ENCODE measurements at regions of chr12 and their contacts with region 1.

Region 1: GRCh38 chr12:121793838-121794533 is 498 bp upstream of the RHOF start:
- DNase-seq: peak; percentile 88 to 96
- ATAC-seq: peak; percentile 45 to 74
- H3K4me3 ChIP-seq: peak overlapping the region; percentile 96
- H3K27ac ChIP-seq: peak overlapping the region; percentile 100
- H3K4me1 ChIP-seq: peaks cover 75% of the 10 kb centered on the region
- CTCF ChIP-seq: peak; percentile 100
- EP300 ChIP-seq: no peak
- POLR2A ChIP-seq: no peak; the same call in 1 of the 2 replicates
- RAD21 ChIP-seq: peak; percentile 94 to 98

Region 2: DNA sequence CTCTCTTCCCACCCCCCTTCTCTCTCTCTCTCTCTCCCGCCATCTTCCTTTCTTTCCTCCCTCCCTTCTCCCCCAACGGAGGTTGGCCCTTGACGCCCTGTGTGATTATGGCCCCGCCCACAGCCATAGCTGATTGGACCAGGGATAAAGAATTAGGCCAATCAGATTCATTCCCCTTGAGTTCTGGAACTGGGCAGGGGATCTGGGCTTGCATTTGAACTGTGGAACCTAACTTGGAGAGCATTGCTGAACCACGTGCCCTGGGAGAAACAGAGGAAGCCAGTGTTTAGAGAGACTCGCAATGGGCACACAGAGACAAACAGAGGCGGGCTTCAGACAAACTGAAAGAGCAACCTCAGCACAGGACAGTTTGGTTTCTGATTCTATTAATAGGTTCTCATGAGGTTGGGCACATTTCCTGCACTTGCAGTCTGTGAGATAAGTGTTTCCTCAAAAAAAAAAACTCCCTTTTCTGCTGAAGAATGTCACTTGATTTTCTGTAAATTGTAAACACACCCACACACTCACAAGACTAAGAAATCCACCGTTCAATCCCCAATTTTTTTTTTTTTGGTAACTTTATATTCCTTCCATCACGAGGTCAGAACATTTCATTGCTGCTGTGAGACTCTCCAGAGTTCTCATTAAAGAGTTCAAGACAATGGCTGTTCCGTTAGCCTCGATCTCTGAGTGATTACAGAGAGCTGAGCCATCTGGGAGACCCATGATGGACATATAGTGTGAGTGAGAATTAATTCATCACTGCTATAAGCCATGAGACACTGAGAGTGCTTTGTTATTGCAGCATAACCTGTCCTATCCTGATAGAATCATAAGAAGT is 664.8 kb before region 1 on chr12:
- CTCF ChIA-PET with region 1: no interaction called
- POLR2A ChIA-PET with region 1: no interaction called
- DNase-seq: peak; percentile 36 to 55
- ATAC-seq: peak in 1 of 2 experiments; percentile 37; a peak in 3 of 6 replicates
- H3K4me3 ChIP-seq: no peak overlapping the region
- H3K27ac ChIP-seq: no peak overlapping the region
- H3K4me1 ChIP-seq: peaks cover 10% of the 10 kb centered on the region; the same call in 2 of the 3 replicates
- CTCF ChIP-seq: no peak
- EP300 ChIP-seq: no peak
- POLR2A ChIP-seq: no peak
- RAD21 ChIP-seq: no peak

Region 3: DNA sequence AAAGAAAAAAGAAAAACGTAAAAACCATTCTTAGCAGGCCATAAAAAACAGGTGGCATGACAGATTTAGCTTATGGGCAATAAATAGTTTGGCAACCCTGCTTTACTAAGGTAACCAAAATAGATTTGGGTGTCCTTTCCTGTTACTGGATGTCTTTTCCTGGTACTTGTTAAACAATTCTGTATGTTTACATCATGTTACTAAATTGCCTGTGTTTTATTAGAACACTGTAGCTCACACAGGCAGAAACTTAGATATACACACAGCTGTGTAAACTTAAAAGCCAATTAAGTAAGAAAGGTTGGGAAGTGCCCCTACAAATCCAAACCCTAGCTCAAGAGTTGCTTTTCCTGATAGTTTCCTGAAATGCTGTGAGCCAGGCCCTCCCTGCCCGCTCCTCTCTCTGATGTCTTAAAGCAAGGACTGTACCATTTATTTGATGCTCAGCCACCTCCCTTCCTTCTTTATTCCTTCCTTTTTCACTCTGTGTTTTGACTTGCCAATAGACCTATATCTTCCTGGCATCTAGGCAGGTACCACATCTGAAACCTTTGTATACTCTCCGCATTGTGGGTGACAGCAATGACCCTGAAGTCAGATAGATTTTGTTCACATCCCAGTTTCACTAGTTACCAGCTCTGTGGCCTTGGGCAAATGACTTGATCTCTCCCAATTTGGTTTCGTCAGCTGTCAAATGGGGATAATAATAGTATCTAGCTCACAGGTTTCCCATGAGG is 493.7 kb before region 1 on chr12:
- CTCF ChIA-PET with region 1: no interaction called
- POLR2A ChIA-PET with region 1: no interaction called
- DNase-seq: no peak
- ATAC-seq: no peak
- H3K4me3 ChIP-seq: no peak overlapping the region
- H3K27ac ChIP-seq: no peak overlapping the region
- H3K4me1 ChIP-seq: peaks cover 8% of the 10 kb centered on the region
- CTCF ChIP-seq: no peak
- EP300 ChIP-seq: no peak
- POLR2A ChIP-seq: no peak
- RAD21 ChIP-seq: no peak

Region 4: DNA sequence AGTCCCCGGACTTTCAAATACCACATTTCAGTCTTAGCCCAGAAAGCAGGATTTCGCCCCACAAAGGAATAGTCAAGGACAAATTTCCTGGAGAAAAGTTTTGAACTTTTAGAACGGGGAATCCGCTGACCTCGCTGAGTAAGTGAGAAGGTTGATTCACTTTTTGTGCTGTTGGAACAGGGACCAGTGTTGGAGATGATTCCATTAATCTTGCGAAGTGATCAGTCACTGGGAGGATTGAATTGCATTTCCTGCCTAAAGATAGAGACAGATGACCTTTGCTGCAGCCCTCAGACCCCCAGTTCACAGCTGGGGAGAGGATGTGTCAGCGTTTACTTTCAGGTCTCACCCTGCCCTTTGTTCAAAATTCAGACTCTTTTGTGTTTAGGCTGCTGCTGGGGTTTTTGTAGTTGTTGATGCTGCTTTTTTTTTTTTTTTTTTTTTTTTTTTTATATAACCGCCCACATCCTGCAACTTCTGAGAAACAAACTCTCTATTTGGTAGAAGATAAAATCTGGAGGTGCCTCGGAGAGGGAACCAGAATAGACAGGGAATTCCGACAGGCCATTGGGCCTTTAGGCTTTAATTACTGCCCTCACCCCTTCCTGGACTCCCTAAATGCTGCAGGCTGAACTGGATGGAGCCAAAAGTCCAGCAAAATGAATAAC is 203.4 kb before region 1 on chr12:
- CTCF ChIA-PET with region 1: no interaction called
- POLR2A ChIA-PET with region 1: no interaction called
- DNase-seq: no peak
- ATAC-seq: peak; percentile 30 to 40; a peak in 3 of 6 replicates
- H3K4me3 ChIP-seq: no peak overlapping the region; the same call in 2 of the 3 replicates
- H3K27ac ChIP-seq: peak overlapping the region; percentile 38 to 85; a peak in 4 of 6 replicates
- H3K4me1 ChIP-seq: peaks cover 5% of the 10 kb centered on the region; the same call in 1 of the 3 replicates
- CTCF ChIP-seq: no peak
- EP300 ChIP-seq: no peak
- POLR2A ChIP-seq: no peak
- RAD21 ChIP-seq: no peak

Region 5: DNA sequence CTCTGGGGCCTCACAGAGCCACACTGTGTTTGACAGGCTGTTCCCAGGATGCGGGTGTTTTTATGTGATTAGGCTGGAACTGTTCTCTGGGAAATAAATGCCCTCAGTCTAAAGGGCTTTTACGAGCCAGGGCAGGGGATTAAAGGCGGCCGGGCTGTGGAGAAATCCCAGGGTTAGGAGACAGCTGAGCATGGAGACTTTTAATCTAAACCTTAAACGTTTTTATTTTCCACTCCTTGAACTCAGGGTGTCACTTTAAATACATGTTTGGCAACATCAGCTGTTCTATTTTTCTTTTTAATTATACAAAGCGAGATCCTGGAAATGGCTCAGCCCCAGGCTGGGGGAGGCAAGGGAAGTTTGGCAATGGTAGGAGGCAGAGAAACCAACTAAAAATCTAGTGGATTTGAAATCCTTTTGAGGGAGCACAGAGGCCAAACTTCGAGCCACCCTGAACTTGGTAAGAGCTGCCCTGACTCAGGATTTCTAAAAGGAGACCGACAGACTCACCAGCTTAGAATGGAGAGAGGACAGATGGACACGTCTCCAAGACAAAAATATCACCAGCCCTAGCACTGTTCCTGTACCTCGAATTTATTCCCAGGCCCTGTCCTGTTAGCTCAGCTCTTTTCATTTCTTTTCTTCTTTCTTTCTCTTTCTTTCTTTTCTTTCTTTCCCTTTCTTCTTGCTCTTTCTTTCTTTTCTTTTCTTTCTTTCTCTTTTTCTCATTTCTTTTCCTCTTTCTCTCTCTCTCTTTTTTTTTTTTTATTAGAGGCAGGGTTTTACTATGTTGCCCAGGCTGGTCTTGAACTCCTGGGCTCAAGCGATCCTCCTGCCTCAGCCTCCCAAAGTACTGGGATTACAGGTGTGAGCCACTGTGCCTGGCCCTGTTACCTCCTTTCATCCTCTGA is 183.5 kb before region 1 on chr12:
- CTCF ChIA-PET with region 1: no interaction called
- POLR2A ChIA-PET with region 1: no interaction called
- DNase-seq: no peak
- ATAC-seq: peak; percentile 13 to 55; a peak in 2 of 6 replicates
- H3K4me3 ChIP-seq: no peak overlapping the region
- H3K27ac ChIP-seq: 0 out of 6 replicates have a peak overlapping the region, but pooled peaks of 1 of the 2 experiments have one; percentile 23
- H3K4me1 ChIP-seq: no peaks in the 10 kb centered on the region
- CTCF ChIP-seq: no peak
- EP300 ChIP-seq: no peak
- POLR2A ChIP-seq: no peak
- RAD21 ChIP-seq: no peak

Region 6: GRCh38 chr12:121712461-121713256 is 81.3 kb before region 1 on chr12 and contains the start of gene TMEM120B:
- CTCF ChIA-PET with region 1: interaction called, 50 read pairs
- POLR2A ChIA-PET with region 1: interaction called, 3 read pairs
- DNase-seq: peak; percentile 70 to 75
- ATAC-seq: peak; percentile 78 to 81
- H3K4me3 ChIP-seq: peak within 1 kb of the TSS; percentile 69
- H3K27ac ChIP-seq: peak within 1 kb of the TSS; percentile 73 to 86
- H3K4me1 ChIP-seq: peaks cover 32% of the 10 kb centered on the region
- CTCF ChIP-seq: peak; percentile 11; the same call in 1 of the 3 replicates
- EP300 ChIP-seq: no peak
- POLR2A ChIP-seq: peak; percentile 97
- RAD21 ChIP-seq: no peak
- polyA plus RNA-seq, gene TMEM120B: 13.2 and 18.2 TPM in 2 replicates

Region 7: DNA sequence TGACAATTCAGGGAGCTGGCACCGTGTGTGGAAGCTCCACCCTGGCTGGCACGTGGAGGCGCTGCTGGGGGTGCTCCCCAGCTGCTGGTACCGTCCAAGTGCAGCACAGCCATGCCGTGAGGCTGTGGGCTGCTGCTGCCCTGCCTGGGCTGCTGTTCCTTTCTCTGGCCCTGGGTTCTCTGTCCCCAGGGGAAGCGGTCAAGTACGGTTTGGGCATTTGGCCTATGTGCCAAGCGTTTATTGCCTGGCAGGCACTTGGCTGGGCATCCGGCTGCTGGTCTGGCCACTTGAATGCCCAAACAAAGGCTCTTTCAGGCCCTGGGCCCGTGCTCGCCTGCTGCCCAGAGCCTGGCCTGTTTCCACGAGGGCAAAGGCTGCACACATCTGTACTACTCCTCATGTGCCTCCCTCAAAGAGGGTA is 40.1 kb before region 1 on chr12:
- CTCF ChIA-PET with region 1: interaction called, 2,657 read pairs
- POLR2A ChIA-PET with region 1: no interaction called
- DNase-seq: no peak
- ATAC-seq: no peak
- H3K4me3 ChIP-seq: no peak overlapping the region
- H3K27ac ChIP-seq: peak overlapping the region in 1 of 2 experiments; percentile 45; a peak in 1 of 6 replicates
- H3K4me1 ChIP-seq: peaks cover 13% of the 10 kb centered on the region
- CTCF ChIP-seq: no peak
- EP300 ChIP-seq: no peak
- POLR2A ChIP-seq: no peak
- RAD21 ChIP-seq: no peak

Region 8: GRCh38 chr12:121861636-121862254 is 67.8 kb after region 1 on chr12:
- CTCF ChIA-PET with region 1: interaction called, 10 read pairs
- POLR2A ChIA-PET with region 1: no interaction called
- DNase-seq: no peak
- ATAC-seq: no peak
- H3K4me3 ChIP-seq: no peak overlapping the region
- H3K27ac ChIP-seq: no peak overlapping the region
- H3K4me1 ChIP-seq: peaks cover 20% of the 10 kb centered on the region
- CTCF ChIP-seq: no peak
- EP300 ChIP-seq: no peak
- POLR2A ChIP-seq: no peak
- RAD21 ChIP-seq: no peak

Region 9: DNA sequence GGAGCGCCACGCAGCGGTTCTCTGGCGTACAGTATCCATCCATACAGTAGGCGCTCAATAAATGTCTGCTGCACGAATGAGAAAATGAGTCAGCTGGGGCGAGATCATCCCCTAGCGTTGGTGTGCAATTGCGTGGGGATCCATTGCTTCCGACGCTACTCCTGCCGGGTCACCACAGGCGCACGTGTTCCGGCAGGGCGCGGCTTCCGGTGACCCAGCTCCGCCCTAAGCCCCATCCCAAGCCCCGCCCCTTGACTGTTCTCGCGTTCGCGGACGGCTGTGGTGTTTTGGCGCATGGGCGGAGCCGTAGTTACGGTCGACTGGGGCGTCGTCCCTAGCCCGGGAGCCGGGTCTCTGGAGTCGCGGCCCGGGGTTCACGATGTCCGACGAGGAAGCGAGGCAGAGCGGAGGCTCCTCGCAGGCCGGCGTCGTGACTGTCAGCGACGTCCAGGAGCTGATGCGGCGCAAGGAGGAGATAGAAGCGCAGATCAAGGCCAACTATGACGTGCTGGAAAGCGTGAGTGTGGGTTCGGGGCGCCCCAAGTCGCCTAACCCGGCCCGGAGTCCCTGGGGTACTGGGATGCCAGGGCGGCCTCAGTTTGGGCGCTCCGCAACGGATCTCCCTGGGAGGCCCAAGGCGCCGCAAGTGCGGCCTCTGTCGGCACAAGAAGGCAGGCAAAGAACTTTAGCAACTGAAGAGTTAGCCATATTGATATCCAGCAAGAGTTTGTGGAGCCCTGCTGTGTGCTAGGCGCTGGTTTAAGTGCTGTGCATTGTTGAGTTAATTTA is 94.7 kb after region 1 on chr12 and contains the start of gene PSMD9:
- CTCF ChIA-PET with region 1: interaction called, 195 read pairs
- POLR2A ChIA-PET with region 1: interaction called, 20 read pairs
- DNase-seq: peak; percentile 97 to 99
- ATAC-seq: peak; percentile 96 to 97
- H3K4me3 ChIP-seq: peak within 1 kb of the TSS; percentile 69
- H3K27ac ChIP-seq: peak within 1 kb of the TSS; percentile 86 to 92
- H3K4me1 ChIP-seq: peaks cover 22% of the 10 kb centered on the region
- CTCF ChIP-seq: peak; percentile 65
- EP300 ChIP-seq: peak in 1 of 2 experiments; percentile 29; a peak in 1 of 5 replicates
- POLR2A ChIP-seq: peak; percentile 72
- RAD21 ChIP-seq: peak; percentile 68 to 76; a peak in 4 of 5 replicates
- polyA plus RNA-seq, gene PSMD9: 81.4 and 89.3 TPM in 2 replicates